AG04450 (cell line): ENCODE measurements at regions of chr10 and their contacts with region 1.

Region 1: GRCh38 chr10:112803961-112804401 is 146.1 kb upstream of the TCF7L2 start:
- DNase-seq: no peak
- H3K4me3 ChIP-seq: no peak overlapping the region
- H3K27ac ChIP-seq: no peak overlapping the region
- H3K27me3 ChIP-seq: no peaks in the 10 kb centered on the region
- CTCF ChIP-seq: no peak

Region 2: DNA sequence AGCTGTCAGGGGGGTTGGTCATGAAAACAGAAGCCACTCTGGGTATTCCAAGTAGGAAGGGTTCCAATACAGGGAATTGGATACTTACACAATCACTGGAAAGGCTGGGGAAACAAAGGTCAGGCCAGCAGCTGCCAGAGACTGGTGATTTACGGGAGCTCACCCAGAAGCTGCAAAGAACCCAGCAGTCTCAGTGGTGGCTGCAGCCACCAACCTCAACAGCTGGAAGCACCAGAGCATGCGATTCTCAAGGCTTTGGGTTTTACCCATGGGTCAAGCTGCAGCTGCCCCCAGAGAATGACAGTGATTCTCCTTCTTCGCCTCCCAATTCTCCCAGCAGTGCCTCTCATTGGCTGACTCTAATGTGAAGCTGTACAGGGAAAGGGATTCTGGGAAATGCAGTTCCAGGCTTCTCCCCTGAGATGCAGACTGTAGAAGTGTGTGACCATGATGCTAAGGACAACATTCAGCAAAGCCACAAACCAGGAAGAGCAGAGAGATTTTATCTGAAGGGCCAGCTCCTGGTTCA is 38.9 kb after region 1 on chr10:
- CTCF ChIA-PET with region 1: interaction called, 10 read pairs
- POLR2A ChIA-PET with region 1: no interaction called
- DNase-seq: no peak
- H3K4me3 ChIP-seq: no peak overlapping the region
- H3K27ac ChIP-seq: no peak overlapping the region
- H3K27me3 ChIP-seq: peaks cover 4% of the 10 kb centered on the region
- CTCF ChIP-seq: no peak